ENCODE measurements at regions of chr11 and their contacts with region 1.

Region 1: GRCh38 chr11:31397239-31397834 is 27.7 kb downstream of the DNAJC24 start:
- DNase-seq: peak in 1 of 2 donors; percentile 45
- ATAC-seq: peak in 1 of 3 donors; percentile 53
- H3K4me3 ChIP-seq: no peak overlapping the region
- H3K4me3 Mint-ChIP-seq: no peak overlapping the region
- H3K27ac ChIP-seq: no peak overlapping the region
- H3K27ac Mint-ChIP-seq: no peak overlapping the region
- H3K4me1 ChIP-seq: no peaks in the 10 kb centered on the region
- H3K4me1 Mint-ChIP-seq: no peaks in the 10 kb centered on the region
- H3K27me3 ChIP-seq: no peaks in the 10 kb centered on the region
- H3K27me3 Mint-ChIP-seq: no peaks in the 10 kb centered on the region
- CTCF ChIP-seq: peak; percentile 62

Region 2: DNA sequence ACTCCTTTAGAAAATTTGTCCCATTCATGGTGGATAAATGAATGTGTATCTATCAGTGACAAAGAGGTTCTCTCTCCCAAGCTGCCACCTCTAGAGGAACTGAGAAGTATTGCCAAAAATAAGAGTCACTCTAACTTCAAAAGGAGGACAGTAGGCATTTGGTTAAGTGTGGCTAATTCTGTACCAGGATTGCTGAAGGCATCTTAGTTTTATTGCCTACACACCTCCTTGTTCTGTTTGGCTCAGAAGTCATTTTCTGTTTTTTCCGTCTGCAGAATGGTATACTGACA is 622.2 kb before region 1 on chr11:
- intact Hi-C with region 1: no loop called
- DNase-seq: no peak
- ATAC-seq: no peak
- H3K4me3 ChIP-seq: no peak overlapping the region
- H3K4me3 Mint-ChIP-seq: no peak overlapping the region
- H3K27ac ChIP-seq: no peak overlapping the region
- H3K27ac Mint-ChIP-seq: no peak overlapping the region
- H3K4me1 ChIP-seq: no peaks in the 10 kb centered on the region
- H3K4me1 Mint-ChIP-seq: no peaks in the 10 kb centered on the region
- H3K27me3 ChIP-seq: no peaks in the 10 kb centered on the region
- H3K27me3 Mint-ChIP-seq: peaks cover 0 to 11% of the 10 kb centered on the region in 2 donors
- CTCF ChIP-seq: no peak

Region 3: GRCh38 chr11:30960387-30960992 is 436.8 kb before region 1 on chr11:
- intact Hi-C with region 1: no loop called
- DNase-seq: no peak
- ATAC-seq: no peak
- H3K4me3 ChIP-seq: no peak overlapping the region
- H3K4me3 Mint-ChIP-seq: no peak overlapping the region
- H3K27ac ChIP-seq: no peak overlapping the region
- H3K27ac Mint-ChIP-seq: no peak overlapping the region
- H3K4me1 ChIP-seq: no peaks in the 10 kb centered on the region
- H3K4me1 Mint-ChIP-seq: no peaks in the 10 kb centered on the region
- H3K27me3 ChIP-seq: no peaks in the 10 kb centered on the region
- H3K27me3 Mint-ChIP-seq: no peaks in the 10 kb centered on the region
- CTCF ChIP-seq: no peak

Region 4: DNA sequence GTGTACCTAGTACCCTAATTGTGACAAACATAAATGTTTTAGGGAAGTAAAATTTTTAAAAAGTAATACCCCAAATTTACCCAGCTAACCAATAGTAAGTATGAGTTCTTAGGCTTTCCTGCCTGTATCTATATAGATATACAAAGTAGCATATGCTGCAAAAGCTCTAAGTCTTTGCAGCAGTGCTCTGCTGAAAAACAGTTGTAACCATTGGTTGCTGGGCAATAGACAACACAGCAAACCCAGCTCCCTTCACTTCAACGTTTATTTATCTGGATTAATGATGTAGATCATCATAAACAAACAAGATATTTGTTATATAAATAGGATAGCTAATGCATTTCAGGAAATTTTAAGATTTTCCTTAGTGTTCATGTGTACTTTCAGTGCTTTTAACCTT is 331.1 kb after region 1 on chr11:
- intact Hi-C with region 1: no loop called
- DNase-seq: no peak
- ATAC-seq: no peak
- H3K4me3 ChIP-seq: no peak overlapping the region
- H3K4me3 Mint-ChIP-seq: no peak overlapping the region
- H3K27ac ChIP-seq: no peak overlapping the region
- H3K27ac Mint-ChIP-seq: no peak overlapping the region
- H3K4me1 ChIP-seq: no peaks in the 10 kb centered on the region
- H3K4me1 Mint-ChIP-seq: peaks cover 8 to 12% of the 10 kb centered on the region in 2 donors
- H3K27me3 ChIP-seq: no peaks in the 10 kb centered on the region
- H3K27me3 Mint-ChIP-seq: no peaks in the 10 kb centered on the region
- CTCF ChIP-seq: no peak

Region 5: DNA sequence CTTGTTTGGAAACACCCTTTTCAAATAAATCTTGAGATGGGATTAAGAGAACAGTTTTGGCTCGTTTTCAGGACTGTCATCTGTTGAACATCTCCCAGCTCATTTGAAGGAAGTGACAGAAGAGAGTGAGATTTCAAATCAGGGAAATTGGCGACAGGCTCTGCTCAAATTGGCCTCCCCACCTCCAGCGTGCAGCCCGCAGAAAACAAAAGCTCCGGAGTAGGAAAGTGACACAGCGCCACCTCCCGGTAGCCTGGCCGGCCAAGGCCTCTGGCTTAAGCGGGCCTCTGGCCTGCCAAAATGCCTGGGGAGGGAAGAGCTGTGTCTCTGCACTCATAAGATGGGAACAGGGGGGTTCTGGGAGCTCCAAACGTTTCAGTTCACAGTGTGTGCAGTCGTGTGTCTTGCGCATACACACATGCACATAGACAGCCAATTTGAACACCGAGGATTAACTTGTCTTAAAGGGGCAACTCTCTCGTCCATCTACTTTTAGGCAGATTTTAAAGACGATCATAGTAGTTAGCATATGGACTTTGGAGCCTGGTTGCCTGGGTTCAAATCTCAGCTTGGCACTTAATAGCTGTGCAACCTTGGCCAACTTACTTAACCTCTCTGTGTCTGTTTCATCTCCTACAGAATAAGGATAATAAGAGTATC is 560.9 kb after region 1 on chr11:
- intact Hi-C with region 1: loop called (anchors 1 kb)
- DNase-seq: peak; percentile 46 to 66
- ATAC-seq: peak in 2 of 3 donors; percentile 68 to 78
- H3K4me3 ChIP-seq: no peak overlapping the region
- H3K4me3 Mint-ChIP-seq: no peak overlapping the region
- H3K27ac ChIP-seq: no peak overlapping the region
- H3K27ac Mint-ChIP-seq: no peak overlapping the region
- H3K4me1 ChIP-seq: no peaks in the 10 kb centered on the region
- H3K4me1 Mint-ChIP-seq: no peaks in the 10 kb centered on the region
- H3K27me3 ChIP-seq: no peaks in the 10 kb centered on the region
- H3K27me3 Mint-ChIP-seq: peaks cover 7% of the 10 kb centered on the region in 2 donors
- CTCF ChIP-seq: peak; percentile 67

Region 6: GRCh38 chr11:32006799-32007388 is 609.6 kb after region 1 on chr11:
- intact Hi-C with region 1: loop called (anchors 2 kb)
- DNase-seq: peak in 1 of 2 donors; percentile 52
- ATAC-seq: peak; percentile 61 to 81 (median 67)
- H3K4me3 ChIP-seq: no peak overlapping the region
- H3K4me3 Mint-ChIP-seq: no peak overlapping the region
- H3K27ac ChIP-seq: no peak overlapping the region
- H3K27ac Mint-ChIP-seq: no peak overlapping the region
- H3K4me1 ChIP-seq: no peaks in the 10 kb centered on the region
- H3K4me1 Mint-ChIP-seq: no peaks in the 10 kb centered on the region
- H3K27me3 ChIP-seq: peaks cover 3% of the 10 kb centered on the region
- H3K27me3 Mint-ChIP-seq: peaks cover 31 to 63% of the 10 kb centered on the region in 2 donors
- CTCF ChIP-seq: peak; percentile 71

Measured in natural killer cell (primary cell).